A673 (cell line): ENCODE measurements at regions of chr3 and their contacts with region 1.

Region 1: DNA sequence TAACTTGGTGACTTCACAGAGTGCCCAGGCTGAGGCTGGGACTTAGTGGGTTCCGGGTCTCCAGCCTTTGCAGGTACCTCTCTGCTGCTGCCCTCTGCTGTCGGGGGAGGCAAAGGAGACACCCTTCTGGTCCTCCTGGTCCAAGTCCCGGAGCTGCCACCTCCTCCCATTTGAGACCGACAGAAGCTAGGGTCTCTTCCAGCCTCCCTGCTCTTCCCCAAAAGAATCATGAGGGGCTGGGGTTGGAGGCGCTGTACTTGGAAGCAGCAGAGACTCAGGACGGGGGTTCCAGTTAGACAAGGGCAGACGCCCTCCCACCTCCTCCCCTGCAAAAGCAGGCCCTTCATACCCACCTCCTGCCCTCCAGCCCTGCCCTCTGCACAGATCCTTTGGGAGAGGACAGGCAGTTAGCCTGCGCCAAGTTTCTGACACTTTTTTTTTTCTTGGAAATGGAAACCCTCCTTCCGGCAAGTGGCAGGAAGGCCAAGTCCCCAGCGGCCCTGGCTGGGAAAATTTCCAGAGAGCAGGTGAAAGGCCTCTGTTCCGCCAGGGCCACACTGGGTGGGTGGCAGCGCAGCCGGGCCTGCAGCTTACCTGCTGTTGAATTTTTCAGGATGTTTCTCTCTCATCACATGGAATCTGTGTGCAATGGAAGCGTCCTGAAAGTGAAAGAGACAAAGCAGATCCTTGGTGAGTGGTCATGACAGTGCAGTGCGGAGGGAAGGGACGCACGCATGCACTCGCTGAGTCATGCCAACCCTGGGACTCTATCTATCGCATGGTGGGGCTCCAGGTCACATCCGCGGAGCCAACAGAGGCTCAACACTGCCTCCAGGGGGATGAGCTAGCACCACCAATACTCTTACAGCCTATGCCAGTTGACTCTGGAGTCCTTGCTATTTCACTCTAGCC is 119.9 kb downstream of the DGKG start:
- DNase-seq: peak; percentile 96
- H3K4me3 ChIP-seq: peak overlapping the region; percentile 46
- H3K27ac ChIP-seq: peak overlapping the region; percentile 82
- H3K4me1 ChIP-seq: peaks cover 32% of the 10 kb centered on the region
- H3K27me3 ChIP-seq: no peaks in the 10 kb centered on the region
- CTCF ChIP-seq: peak; percentile 78

Region 2: GRCh38 chr3:185585859-185586685 is 656.1 kb before region 1 on chr3 and contains the start of gene SENP2:
- CTCF ChIA-PET with region 1: no interaction called
- POLR2A ChIA-PET with region 1: no interaction called
- intact Hi-C with region 1: no loop called
- DNase-seq: peak; percentile 99
- H3K4me3 ChIP-seq: peak within 1 kb of the TSS; percentile 94
- H3K27ac ChIP-seq: peak within 1 kb of the TSS; percentile 91
- H3K4me1 ChIP-seq: peaks cover 13% of the 10 kb centered on the region
- H3K27me3 ChIP-seq: no peaks in the 10 kb centered on the region
- CTCF ChIP-seq: no peak
- total RNA-seq, gene SENP2: 43.4 and 48.3 TPM in 2 replicates

Region 3: GRCh38 chr3:186002884-186003472 is 239.2 kb before region 1 on chr3:
- CTCF ChIA-PET with region 1: interaction called, 11 read pairs
- POLR2A ChIA-PET with region 1: no interaction called
- intact Hi-C with region 1: no loop called
- DNase-seq: peak; percentile 73
- H3K4me3 ChIP-seq: no peak overlapping the region
- H3K27ac ChIP-seq: no peak overlapping the region
- H3K4me1 ChIP-seq: no peaks in the 10 kb centered on the region
- H3K27me3 ChIP-seq: no peaks in the 10 kb centered on the region
- CTCF ChIP-seq: peak; percentile 61

Region 4: GRCh38 chr3:186381424-186382216 is 139.5 kb after region 1 on chr3:
- CTCF ChIA-PET with region 1: no interaction called
- POLR2A ChIA-PET with region 1: no interaction called
- intact Hi-C with region 1: no loop called
- DNase-seq: no peak
- H3K4me3 ChIP-seq: no peak overlapping the region
- H3K27ac ChIP-seq: no peak overlapping the region
- H3K4me1 ChIP-seq: no peaks in the 10 kb centered on the region
- H3K27me3 ChIP-seq: no peaks in the 10 kb centered on the region
- CTCF ChIP-seq: no peak